Activated naive CD4-positive, alpha-beta T cell treated with anti-CD3 and anti-CD28 coated beads for 36 hours (primary cell): ENCODE measurements at regions of chr20 and their contacts with region 1.

Region 1: GRCh38 chr20:56606885-56607704 is 22.0 kb upstream of the TFAP2C start:
- DNase-seq: no peak
- H3K4me3 Mint-ChIP-seq: no peak overlapping the region
- H3K27ac Mint-ChIP-seq: no peak overlapping the region
- H3K4me1 Mint-ChIP-seq: no peaks in the 10 kb centered on the region
- H3K27me3 Mint-ChIP-seq: no peaks in the 10 kb centered on the region

Region 2: DNA sequence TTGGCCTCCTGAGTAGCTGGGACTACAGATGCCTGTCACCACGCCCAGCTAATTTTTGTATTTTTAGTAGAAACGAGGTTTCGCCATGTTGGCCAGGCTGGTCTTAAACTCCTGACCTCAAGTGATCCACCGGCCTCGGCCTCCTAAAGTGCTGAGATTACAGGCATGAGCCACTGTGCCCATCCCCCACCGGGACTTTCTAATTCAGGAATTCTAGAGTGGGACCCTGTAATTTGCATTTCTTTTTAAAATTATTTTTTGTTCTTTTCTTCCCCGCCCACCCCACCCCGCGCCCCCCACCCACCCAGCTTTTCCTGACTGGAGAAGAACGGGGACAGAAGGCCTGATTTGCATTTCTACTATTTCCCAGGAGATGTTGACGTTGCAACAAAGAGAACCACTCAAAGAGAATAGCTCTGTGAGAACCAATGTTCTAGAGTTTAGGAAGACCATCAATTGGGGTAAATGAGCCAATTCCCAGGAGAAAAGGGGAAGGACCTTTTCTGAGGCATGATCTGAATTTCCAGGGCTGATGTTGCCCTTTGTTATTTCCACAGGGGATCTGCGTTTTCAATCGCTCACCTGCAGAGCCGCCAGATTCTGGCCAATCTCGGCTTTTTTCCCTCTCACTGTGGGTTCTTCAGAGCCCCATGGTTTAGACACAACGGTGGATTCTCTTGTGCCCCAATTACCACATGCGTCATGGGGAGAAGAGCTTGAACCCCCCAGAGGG is 11.2 kb before region 1 on chr20:
- CTCF ChIA-PET with region 1: interaction called, 11 read pairs
- intact Hi-C with region 1: no loop called
- DNase-seq: no peak
- H3K4me3 Mint-ChIP-seq: no peak overlapping the region
- H3K27ac Mint-ChIP-seq: no peak overlapping the region
- H3K4me1 Mint-ChIP-seq: no peaks in the 10 kb centered on the region
- H3K27me3 Mint-ChIP-seq: no peaks in the 10 kb centered on the region